Sciatic nerve (tissue), 2 donors: ENCODE measurements at regions of chr2 and their contacts with region 1.

Region 1: GRCh38 chr2:37672104-37672869 is 845 bp upstream of the CDC42EP3 start:
- DNase-seq: peak; percentile 83
- ATAC-seq: peak; percentile 37

Region 2: DNA sequence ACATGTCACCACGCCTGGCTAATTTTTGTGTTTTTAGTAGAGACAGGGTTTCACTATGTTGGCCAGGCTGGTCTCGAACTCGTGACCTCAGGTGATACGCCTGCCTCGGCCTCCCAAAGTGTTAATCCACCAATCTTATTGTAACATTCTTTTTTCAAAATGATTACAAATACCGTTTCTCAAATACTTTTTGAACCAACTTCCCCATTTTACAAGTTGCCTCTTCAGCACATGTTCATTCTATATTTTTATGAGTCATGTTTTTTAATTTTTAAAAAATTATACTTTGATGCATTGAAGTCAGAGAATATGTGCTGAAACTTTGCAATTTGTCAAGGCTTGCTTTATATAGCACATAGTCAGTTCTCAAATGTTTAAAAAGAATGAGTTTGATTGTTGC is 269.7 kb before region 1 on chr2:
- intact Hi-C with region 1: loop called (anchors 5 kb)
- DNase-seq: no peak
- ATAC-seq: no peak

Region 3: DNA sequence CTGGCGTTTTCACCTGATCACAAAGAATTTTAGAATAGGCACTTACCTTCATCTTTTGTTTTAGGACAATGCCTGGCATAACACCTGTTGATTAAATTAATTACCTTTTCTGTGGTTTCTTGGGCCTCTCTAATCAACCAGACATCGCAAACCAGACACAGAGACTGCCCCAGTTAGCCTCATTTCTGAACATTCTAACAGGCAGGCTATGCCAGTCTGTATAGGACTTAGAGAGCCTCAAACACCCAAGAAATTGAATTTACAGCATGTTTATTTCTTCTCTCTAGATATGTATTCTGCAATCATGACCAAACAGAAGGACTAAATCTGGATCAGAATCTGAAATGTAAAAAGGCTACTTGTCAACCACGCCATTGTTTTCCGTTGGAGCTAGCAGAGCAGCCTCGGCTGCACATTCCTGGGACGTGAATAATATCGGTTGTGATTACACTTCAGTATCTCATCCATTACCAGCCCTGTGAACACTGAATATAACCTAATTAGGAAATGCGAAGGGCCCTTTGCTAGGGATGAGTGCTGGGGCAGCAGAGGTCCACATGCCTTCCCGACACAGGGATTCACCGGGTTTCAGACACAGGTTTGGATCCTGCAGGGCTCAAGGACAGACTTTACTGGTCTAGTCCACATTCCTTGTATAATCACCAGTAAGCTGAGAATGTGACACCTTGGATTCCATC is 16.6 kb after region 1 on chr2:
- intact Hi-C with region 1: no loop called
- DNase-seq: no peak
- ATAC-seq: peak; percentile 56